ENCODE measurements at regions of chr12 and their contacts with region 1.

Region 1: GRCh38 chr12:95998611-95999286 is 2.6 kb upstream of the HAL start:
- DNase-seq: peak; percentile 66
- H3K4me3 Mint-ChIP-seq: no peak overlapping the region
- H3K27ac Mint-ChIP-seq: peak overlapping the region; percentile 52
- H3K4me1 Mint-ChIP-seq: peaks cover 7% of the 10 kb centered on the region
- H3K27me3 Mint-ChIP-seq: no peaks in the 10 kb centered on the region

Region 2: DNA sequence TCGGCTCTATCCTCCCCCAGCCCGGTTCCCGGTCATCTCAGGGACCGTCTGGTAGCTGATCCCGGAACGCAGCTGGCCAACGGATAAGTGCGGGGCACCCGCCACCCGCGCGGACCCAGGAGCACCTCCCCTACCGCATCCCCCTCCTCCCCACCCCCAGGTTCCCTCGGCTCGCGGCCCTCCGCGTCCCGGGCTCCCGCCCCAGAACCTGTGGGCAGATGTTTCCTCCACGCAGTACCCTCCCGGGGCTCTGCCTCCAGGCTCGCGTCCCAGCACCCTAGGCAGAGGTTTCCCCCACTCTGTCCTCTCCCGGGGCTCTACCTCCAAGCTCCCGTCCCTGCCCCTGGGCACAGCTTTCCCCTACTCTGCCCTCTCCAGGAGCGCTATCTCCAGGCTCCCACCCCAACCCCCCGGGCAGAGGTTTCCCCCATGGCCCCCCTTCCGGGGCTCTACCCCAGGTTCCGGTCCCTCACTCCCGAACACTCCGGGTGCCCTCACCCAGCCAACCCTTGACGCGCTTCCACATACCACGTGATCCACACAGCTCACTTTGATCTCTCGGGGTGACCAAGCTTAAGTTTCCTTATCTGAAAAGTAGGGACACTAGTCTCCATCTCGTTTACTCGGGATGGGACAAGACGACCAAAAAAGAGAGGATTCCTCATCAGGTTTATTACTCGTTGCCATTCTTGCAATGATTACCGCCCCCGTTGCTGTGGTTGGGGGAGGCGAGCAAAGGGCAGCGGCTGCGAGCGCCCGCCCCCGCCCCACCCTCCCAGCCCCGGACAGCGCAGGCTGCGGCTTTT is 56.0 kb before region 1 on chr12 and contains the start of gene CCDC38:
- CTCF ChIA-PET with region 1: interaction called, 30 read pairs
- DNase-seq: peak; percentile 91
- H3K4me3 Mint-ChIP-seq: peak within 1 kb of the TSS; percentile 91
- H3K27ac Mint-ChIP-seq: peak within 1 kb of the TSS; percentile 81
- H3K4me1 Mint-ChIP-seq: peaks cover 9% of the 10 kb centered on the region
- H3K27me3 Mint-ChIP-seq: peaks cover 19% of the 10 kb centered on the region

Region 3: GRCh38 chr12:95953000-95953399 is 45.7 kb before region 1 on chr12:
- CTCF ChIA-PET with region 1: interaction called, 14 read pairs
- DNase-seq: no peak
- H3K4me3 Mint-ChIP-seq: no peak overlapping the region
- H3K27ac Mint-ChIP-seq: no peak overlapping the region
- H3K4me1 Mint-ChIP-seq: no peaks in the 10 kb centered on the region
- H3K27me3 Mint-ChIP-seq: peaks cover 9% of the 10 kb centered on the region

Region 4: DNA sequence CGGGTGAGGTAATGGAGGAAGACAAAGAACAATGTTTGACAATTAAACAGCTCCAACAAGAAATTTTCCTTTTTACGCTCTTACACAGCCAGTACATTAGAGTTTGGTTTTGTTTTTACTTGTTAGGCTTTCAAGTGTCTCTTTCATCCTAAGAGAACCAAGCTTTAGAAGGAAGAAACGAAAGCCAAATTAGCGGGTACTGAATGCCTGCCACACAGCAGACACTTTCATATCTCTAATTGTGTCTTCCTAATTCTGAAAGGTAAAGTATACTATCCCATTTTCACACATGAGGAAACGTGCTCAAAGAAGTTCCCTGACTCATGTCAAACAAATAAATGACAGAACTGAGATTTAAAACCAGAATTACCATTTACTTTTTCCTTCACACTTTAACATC is 336.5 kb after region 1 on chr12:
- CTCF ChIA-PET with region 1: no interaction called
- DNase-seq: peak; percentile 34
- H3K4me3 Mint-ChIP-seq: peak overlapping the region; percentile 19
- H3K27ac Mint-ChIP-seq: peak overlapping the region; percentile 20
- H3K4me1 Mint-ChIP-seq: peaks cover 37% of the 10 kb centered on the region
- H3K27me3 Mint-ChIP-seq: no peaks in the 10 kb centered on the region

Measured in activated naive CD4-positive, alpha-beta T cell treated with anti-CD3 and anti-CD28 coated beads, Interleukin-2, amount 10 ng/mL, durations not matched to agents 7 days and 5 days (primary cell).